CD8-positive, alpha-beta memory T cell (primary cell): ENCODE measurements at regions of chr4 and their contacts with region 1.

Region 1: DNA sequence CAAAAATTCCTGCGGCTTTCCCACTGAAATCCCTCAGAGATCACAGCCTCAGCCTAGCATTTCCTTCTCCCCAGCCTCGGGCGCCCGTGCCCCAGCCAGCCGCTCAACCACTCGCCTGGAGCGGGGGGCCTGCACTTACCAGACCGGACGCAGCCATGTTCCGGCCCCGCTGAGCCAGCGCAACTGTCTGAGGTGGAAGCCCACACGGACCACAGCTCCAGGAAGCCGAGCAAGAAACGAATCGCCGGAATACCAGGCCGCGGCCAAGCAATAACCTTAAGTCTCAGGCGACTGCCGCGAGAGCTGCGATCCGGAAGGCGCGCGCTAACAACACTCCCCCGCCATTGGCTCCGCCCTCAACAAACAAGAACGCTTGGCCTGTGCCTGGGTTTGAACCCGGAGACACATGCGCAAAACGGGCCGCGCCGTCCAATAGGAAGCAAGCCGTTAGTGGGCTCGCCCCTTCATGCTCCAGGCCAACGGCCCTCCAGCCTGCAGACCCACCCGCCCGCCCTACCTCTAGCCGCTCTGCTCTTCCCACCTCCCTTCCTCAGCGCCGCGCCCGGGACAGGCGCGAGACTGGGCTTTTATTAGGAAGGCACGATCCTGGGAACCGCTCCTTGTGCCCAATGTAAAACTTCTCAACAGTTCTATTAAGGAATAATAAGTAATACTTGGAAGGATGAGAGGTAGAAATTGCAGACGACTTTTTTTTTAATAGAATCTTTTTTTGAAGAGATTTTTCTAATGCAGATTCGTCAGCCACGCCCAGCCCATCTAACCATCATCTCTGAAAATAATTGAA is at the start of gene CENPC:
- DNase-seq: peak; percentile 86 to 95 (median 90)
- H3K4me3 ChIP-seq: peak within 1 kb of the TSS; percentile 94
- H3K4me3 Mint-ChIP-seq: peak within 1 kb of the TSS; percentile 91 to 98 (median 96)
- H3K27ac ChIP-seq: peak within 1 kb of the TSS; percentile 98
- H3K27ac Mint-ChIP-seq: peak within 1 kb of the TSS; percentile 98 to 100 (median 100)
- H3K4me1 ChIP-seq: peaks cover 19% of the 10 kb centered on the region
- H3K4me1 Mint-ChIP-seq: peaks cover 30 to 58% (median 49%) of the 10 kb centered on the region in 3 donors
- H3K27me3 ChIP-seq: no peaks in the 10 kb centered on the region
- H3K27me3 Mint-ChIP-seq: no peaks in the 10 kb centered on the region
- total RNA-seq, gene CENPC: 20.2 to 25.0 TPM

Region 2: DNA sequence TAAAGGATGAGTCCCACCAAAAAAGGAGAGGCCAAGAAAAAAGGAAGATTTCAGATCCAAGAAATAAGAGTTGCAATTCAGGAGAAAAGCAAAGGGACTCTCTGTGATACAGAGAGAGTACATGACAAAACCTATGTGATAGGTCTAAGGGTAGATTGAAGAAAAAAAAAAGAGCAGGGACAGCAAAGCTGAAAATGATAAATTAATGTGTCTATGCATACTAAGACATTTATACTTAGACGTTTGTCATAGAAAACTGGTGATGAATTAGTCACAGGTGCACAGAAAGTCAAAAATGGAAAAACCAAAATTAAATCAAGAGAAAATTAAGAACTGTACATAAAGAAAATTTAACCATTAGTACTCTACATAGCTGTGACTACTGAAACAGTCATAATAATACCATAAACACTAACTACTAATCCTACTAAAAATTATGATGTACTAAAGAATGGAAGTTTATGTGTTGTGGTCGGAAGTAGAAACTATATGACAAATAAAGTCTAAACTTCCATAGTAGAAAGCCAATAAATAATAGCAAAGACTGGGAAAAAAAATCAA is 10.0 kb before region 1 on chr4:
- CTCF ChIA-PET with region 1: interaction called, 10 read pairs
- POLR2A ChIA-PET with region 1: no interaction called
- DNase-seq: no peak
- H3K4me3 ChIP-seq: no peak overlapping the region
- H3K4me3 Mint-ChIP-seq: no peak overlapping the region
- H3K27ac ChIP-seq: no peak overlapping the region
- H3K27ac Mint-ChIP-seq: peak overlapping the region in 1 of 8 donors; percentile 42
- H3K4me1 ChIP-seq: no peaks in the 10 kb centered on the region
- H3K4me1 Mint-ChIP-seq: peaks cover 31 to 68% (median 65%) of the 10 kb centered on the region in 3 donors
- H3K27me3 ChIP-seq: no peaks in the 10 kb centered on the region
- H3K27me3 Mint-ChIP-seq: no peaks in the 10 kb centered on the region

Region 3: GRCh38 chr4:67700738-67701516 is 155.5 kb after region 1 on chr4 and contains the start of gene UBA6:
- CTCF ChIA-PET with region 1: interaction called, 4 read pairs
- POLR2A ChIA-PET with region 1: interaction called, 15 read pairs
- DNase-seq: peak; percentile 90 to 96 (median 95)
- H3K4me3 ChIP-seq: peak within 1 kb of the TSS; percentile 84
- H3K4me3 Mint-ChIP-seq: peak within 1 kb of the TSS; percentile 96 to 99 (median 97)
- H3K27ac ChIP-seq: peak within 1 kb of the TSS; percentile 89
- H3K27ac Mint-ChIP-seq: peak within 1 kb of the TSS; percentile 87 to 99 (median 98)
- H3K4me1 ChIP-seq: peaks cover 35% of the 10 kb centered on the region
- H3K4me1 Mint-ChIP-seq: peaks cover 57 to 83% (median 77%) of the 10 kb centered on the region in 3 donors
- H3K27me3 ChIP-seq: no peaks in the 10 kb centered on the region
- H3K27me3 Mint-ChIP-seq: no peaks in the 10 kb centered on the region
- total RNA-seq, gene UBA6: 69.6 to 71.6 TPM